ENCODE measurements at regions of chr22 and their contacts with region 1.

Region 1: DNA sequence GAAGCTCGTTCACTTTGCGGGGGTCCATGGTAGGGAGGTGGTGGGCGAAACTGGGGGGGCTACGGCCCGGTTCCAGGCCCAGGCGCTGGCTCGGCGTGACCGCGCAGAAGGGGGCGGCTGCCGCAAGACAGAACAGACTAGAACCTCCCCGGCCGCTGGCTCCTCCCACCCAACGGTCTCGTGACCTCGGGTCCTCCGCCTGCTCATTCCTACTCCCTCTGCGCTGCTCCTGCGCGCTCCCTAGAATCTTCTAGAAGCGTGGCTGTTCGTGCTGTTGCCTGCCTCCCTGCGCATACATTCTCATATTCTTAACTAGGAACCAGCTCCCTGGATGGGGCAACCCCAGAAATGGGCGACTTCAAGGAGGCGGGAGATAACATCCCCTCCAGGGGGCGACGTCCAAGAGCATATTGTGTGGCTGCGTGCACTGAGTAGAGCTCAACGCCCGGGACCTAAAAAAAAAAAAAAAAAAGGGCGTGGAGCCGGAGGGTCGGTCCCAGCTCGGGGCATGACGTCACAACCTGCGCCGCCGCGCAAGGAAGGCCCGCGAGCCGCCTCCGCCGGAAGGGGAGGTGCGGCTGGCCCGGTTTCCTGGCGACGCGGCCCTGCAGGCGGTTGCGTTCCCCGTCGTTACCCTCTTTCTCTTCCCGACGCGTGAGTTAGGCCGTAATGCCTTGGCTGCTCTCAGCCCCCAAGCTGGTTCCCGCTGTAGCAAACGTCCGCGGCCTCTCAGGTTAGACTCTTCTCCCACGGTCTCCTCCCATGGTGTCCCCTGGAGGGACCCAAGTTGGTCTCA is at the starts of genes ST13 and XPNPEP3:
- DNase-seq: peak; percentile 97
- H3K4me3 ChIP-seq: peak within 1 kb of the TSS; percentile 56
- H3K4me3 Mint-ChIP-seq: peak within 1 kb of the TSS; percentile 98
- H3K27ac Mint-ChIP-seq: peak within 1 kb of the TSS; percentile 100
- H3K4me1 ChIP-seq: peaks cover 37% of the 10 kb centered on the region
- H3K4me1 Mint-ChIP-seq: peaks cover 6% of the 10 kb centered on the region
- H3K27me3 ChIP-seq: no peaks in the 10 kb centered on the region
- H3K27me3 Mint-ChIP-seq: no peaks in the 10 kb centered on the region
- CTCF ChIP-seq: peak in 1 of 2 experiments; percentile 31
- total RNA-seq, gene ST13: 364 and 385 TPM in 2 replicates
- total RNA-seq, gene XPNPEP3: 32.4 and 35.4 TPM in 2 replicates

Region 2: GRCh38 chr22:40620464-40621046 is 236.2 kb before region 1 on chr22:
- CTCF ChIA-PET with region 1: no interaction called
- POLR2A ChIA-PET with region 1: interaction called, 10 read pairs
- intact Hi-C with region 1: no loop called
- DNase-seq: no peak
- H3K4me3 ChIP-seq: no peak overlapping the region
- H3K4me3 Mint-ChIP-seq: no peak overlapping the region
- H3K27ac Mint-ChIP-seq: peak overlapping the region; percentile 34
- H3K4me1 ChIP-seq: no peaks in the 10 kb centered on the region
- H3K4me1 Mint-ChIP-seq: no peaks in the 10 kb centered on the region
- H3K27me3 ChIP-seq: no peaks in the 10 kb centered on the region
- H3K27me3 Mint-ChIP-seq: no peaks in the 10 kb centered on the region
- CTCF ChIP-seq: no peak

Region 3: GRCh38 chr22:40764763-40765441 is 91.8 kb before region 1 on chr22:
- CTCF ChIA-PET with region 1: no interaction called
- POLR2A ChIA-PET with region 1: no interaction called
- intact Hi-C with region 1: no loop called
- DNase-seq: no peak
- H3K4me3 ChIP-seq: no peak overlapping the region
- H3K4me3 Mint-ChIP-seq: no peak overlapping the region
- H3K27ac Mint-ChIP-seq: no peak overlapping the region
- H3K4me1 ChIP-seq: no peaks in the 10 kb centered on the region
- H3K4me1 Mint-ChIP-seq: no peaks in the 10 kb centered on the region
- H3K27me3 ChIP-seq: no peaks in the 10 kb centered on the region
- H3K27me3 Mint-ChIP-seq: no peaks in the 10 kb centered on the region
- CTCF ChIP-seq: no peak

Region 4: GRCh38 chr22:40867109-40867508 is 10.4 kb after region 1 on chr22:
- CTCF ChIA-PET with region 1: no interaction called
- POLR2A ChIA-PET with region 1: interaction called, 12 read pairs
- intact Hi-C with region 1: no loop called
- DNase-seq: no peak
- H3K4me3 ChIP-seq: no peak overlapping the region
- H3K4me3 Mint-ChIP-seq: no peak overlapping the region
- H3K27ac Mint-ChIP-seq: no peak overlapping the region
- H3K4me1 ChIP-seq: no peaks in the 10 kb centered on the region
- H3K4me1 Mint-ChIP-seq: peaks cover 9% of the 10 kb centered on the region
- H3K27me3 ChIP-seq: no peaks in the 10 kb centered on the region
- H3K27me3 Mint-ChIP-seq: no peaks in the 10 kb centered on the region
- CTCF ChIP-seq: no peak

Region 5: DNA sequence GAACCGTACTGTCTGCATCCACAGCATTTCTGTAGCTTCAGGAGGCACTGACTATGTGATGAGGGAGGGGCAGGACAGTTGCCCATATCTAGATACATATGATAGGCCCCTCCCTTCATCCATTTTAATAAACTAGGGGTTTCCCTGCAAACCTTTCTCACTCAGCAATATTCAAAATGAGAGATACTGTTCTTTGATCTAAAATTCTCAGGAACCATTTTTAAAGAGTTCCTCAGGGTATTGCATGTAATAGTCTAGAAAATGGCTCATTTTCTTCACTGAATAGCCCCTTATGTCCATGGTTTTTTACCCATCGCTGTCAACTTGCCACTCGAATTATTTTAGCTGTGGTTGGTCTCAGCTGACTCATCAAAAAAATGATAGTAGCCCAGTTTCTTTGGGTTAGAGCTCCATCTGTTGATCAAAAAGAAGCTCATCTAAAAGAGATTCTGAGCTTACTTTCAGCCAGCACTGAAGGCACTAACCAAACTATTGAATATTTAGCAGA is 42.2 kb after region 1 on chr22:
- CTCF ChIA-PET with region 1: interaction called, 16 read pairs
- POLR2A ChIA-PET with region 1: interaction called, 10 read pairs
- intact Hi-C with region 1: loop called (anchors 5 kb)
- DNase-seq: peak in 1 of 2 experiments; percentile 40
- H3K4me3 ChIP-seq: no peak overlapping the region
- H3K4me3 Mint-ChIP-seq: no peak overlapping the region
- H3K27ac Mint-ChIP-seq: no peak overlapping the region
- H3K4me1 ChIP-seq: 0 out of 2 replicates have a peak, but pooled peaks cover 3% of the 10 kb centered on the region
- H3K4me1 Mint-ChIP-seq: peaks cover 2% of the 10 kb centered on the region
- H3K27me3 ChIP-seq: no peaks in the 10 kb centered on the region
- H3K27me3 Mint-ChIP-seq: no peaks in the 10 kb centered on the region
- CTCF ChIP-seq: peak; percentile 11 to 45

Region 6: GRCh38 chr22:40928657-40929056 is 71.9 kb after region 1 on chr22:
- CTCF ChIA-PET with region 1: no interaction called
- POLR2A ChIA-PET with region 1: no interaction called
- intact Hi-C with region 1: no loop called
- DNase-seq: peak in 1 of 2 experiments; percentile 21
- H3K4me3 ChIP-seq: no peak overlapping the region
- H3K4me3 Mint-ChIP-seq: no peak overlapping the region
- H3K27ac Mint-ChIP-seq: no peak overlapping the region
- H3K4me1 ChIP-seq: peaks cover 7% of the 10 kb centered on the region
- H3K4me1 Mint-ChIP-seq: no peaks in the 10 kb centered on the region
- H3K27me3 ChIP-seq: no peaks in the 10 kb centered on the region
- H3K27me3 Mint-ChIP-seq: no peaks in the 10 kb centered on the region
- CTCF ChIP-seq: no peak

Region 7: DNA sequence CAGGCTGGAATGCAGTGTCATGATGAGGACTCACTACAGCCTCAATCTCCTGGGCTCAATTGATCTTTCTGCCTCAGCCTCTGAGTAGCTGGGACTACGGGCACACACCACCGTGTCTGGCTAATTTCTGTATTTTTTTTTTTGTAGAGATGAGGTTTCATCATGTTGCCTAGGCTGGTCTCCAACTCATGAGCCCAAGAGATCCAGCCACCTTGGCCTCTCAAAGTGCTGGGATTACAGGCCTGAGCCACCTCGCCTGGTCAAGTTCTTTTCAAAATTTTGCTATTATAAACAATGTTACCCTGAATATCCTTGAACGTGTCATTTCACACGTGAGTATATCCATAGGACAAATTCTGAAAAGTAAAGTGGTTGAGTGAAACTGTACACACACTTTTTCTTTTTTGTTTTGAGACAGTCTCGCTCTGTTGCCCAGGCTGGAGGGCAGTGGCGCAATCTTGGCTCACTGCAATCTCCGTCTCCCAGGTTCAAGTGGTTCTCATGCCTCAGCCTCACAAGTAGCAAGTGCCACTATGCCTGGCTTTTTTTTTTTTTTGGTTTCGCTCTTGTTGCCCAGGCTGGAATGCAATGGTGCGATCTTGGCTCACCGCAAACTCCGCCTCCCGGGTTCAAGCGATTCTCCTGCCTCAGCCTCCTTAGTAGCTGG is 214.1 kb after region 1 on chr22:
- CTCF ChIA-PET with region 1: no interaction called
- POLR2A ChIA-PET with region 1: no interaction called
- intact Hi-C with region 1: no loop called
- DNase-seq: no peak
- H3K4me3 ChIP-seq: no peak overlapping the region
- H3K4me3 Mint-ChIP-seq: no peak overlapping the region
- H3K27ac Mint-ChIP-seq: no peak overlapping the region
- H3K4me1 ChIP-seq: no peaks in the 10 kb centered on the region
- H3K4me1 Mint-ChIP-seq: no peaks in the 10 kb centered on the region
- H3K27me3 ChIP-seq: no peaks in the 10 kb centered on the region
- H3K27me3 Mint-ChIP-seq: no peaks in the 10 kb centered on the region
- CTCF ChIP-seq: no peak

Measured in Caco-2 (cell line).